ENCODE measurements at regions of chr9 and their contacts with region 1.

Region 1: GRCh38 chr9:112819635-112820496 is 69.3 kb downstream of the SNX30 start:
- DNase-seq: peak; percentile 52 to 75
- ATAC-seq: peak; percentile 99 to 100 (median 100)
- H3K4me3 ChIP-seq: no peak overlapping the region
- H3K27ac ChIP-seq: peak overlapping the region; percentile 60
- H3K4me1 ChIP-seq: peaks cover 7% of the 10 kb centered on the region
- H3K27me3 ChIP-seq: no peaks in the 10 kb centered on the region
- CTCF ChIP-seq: peak; percentile 77

Region 2: DNA sequence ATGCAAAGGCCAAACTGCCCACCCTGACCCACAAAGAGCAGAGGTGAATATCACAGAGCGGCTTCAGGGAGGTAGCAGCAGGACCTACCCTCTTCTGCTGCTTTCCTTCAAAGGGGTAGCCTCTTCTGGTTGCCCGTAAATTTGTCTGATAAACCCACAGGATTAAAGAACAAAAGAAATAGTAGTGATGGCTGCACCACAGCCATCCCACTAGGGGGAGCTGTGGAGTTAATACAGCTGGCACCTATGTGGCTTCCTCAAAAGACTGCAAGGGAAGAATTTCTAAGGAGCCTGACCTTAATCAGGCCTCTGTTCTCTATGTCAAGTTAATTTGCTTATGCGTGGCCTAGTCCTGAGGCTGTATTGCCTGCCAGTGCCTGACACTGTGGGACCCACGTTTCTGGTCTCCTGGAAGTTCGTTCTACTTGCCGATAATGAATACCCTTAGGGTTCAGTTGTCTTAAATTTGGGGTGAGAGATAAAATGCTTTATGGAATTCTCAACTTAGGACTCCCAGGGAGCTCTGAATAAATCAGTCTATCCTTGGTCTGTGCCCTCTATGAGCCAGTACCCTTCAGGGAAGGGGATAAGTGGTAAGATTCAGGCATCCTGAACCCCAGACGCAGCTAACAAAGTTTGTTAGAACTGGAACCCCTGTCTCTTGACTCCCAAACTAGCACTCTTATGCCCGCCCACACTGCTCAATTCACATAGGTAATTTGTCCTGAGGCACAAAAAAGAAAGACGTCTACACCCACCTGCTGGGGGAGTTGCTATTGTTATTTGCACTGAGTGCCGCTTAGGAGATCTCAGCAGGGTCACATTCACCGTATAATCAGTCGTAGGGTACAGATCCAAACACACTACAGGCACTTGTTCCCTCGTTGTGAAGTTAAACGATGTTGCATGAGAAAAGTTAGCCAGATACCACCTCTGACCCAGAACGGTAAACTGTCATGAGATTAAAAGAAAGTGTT is 721.9 kb before region 1 on chr9:
- intact Hi-C with region 1: loop called in 1 of 2 experiments (anchors 10 kb)
- DNase-seq: peak; percentile 22 to 61
- ATAC-seq: peak; percentile 48 to 75 (median 70)
- H3K4me3 ChIP-seq: no peak overlapping the region
- H3K27ac ChIP-seq: no peak overlapping the region
- H3K4me1 ChIP-seq: no peaks in the 10 kb centered on the region
- H3K27me3 ChIP-seq: no peaks in the 10 kb centered on the region
- CTCF ChIP-seq: peak; percentile 73

Region 3: GRCh38 chr9:112750111-112750767 is 69.6 kb before region 1 on chr9 and contains the start of gene SNX30:
- intact Hi-C with region 1: loop called in 1 of 2 experiments (anchors 5 kb)
- DNase-seq: peak; percentile 91 to 95
- ATAC-seq: peak; percentile 96 to 97 (median 96)
- H3K4me3 ChIP-seq: peak within 1 kb of the TSS; percentile 98
- H3K27ac ChIP-seq: peak within 1 kb of the TSS; percentile 89
- H3K4me1 ChIP-seq: peaks cover 36% of the 10 kb centered on the region
- H3K27me3 ChIP-seq: no peaks in the 10 kb centered on the region
- CTCF ChIP-seq: peak; percentile 11
- total RNA-seq, gene SNX30: 1.6 to 2.8 (median 2.3) TPM

Region 4: DNA sequence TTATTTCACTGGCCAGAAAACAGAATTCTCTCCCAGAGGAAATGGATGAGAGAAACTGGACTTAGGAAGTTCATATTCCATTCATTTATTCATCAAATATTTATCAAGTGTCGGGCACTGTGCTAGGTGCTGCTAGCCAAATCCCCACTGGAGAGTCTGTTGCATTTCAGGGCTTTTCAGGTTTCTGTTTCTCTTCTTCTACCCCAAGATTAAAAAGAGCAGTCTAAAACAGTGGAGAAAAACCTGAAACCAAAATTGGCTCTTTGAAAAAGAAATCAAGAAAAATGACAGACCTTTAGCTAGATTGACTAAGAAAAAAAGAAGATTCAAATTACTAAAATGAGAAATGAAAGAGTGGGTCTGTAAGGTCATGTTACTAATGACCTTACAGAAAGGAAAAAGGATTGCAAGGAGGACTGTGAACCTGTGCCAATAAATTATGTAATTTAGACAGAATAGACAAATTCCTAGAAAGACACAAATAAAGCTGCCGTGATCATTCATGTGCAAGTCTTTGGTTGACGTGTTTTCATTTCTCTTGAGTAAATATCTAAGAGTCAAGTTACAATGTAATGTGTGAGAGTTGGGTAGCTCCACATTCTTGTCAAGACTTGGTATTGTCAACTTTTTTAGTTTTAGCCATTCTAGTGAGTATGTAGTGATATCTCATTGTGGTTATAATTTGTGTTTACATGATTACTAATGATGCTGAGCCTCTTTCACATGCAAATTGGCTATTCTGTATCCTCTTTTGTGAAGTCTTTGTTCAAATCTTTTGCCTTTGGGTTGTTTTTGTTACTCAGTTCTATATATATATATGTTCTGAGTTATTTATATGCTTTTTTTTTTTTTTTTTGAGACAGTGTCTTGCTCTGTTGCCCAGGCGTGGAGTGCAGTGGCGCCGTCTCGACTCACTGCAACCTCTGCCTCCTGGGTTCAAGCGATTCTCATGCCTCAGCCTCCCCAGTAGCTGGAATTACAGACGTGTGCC is 45.6 kb before region 1 on chr9:
- intact Hi-C with region 1: no loop called
- DNase-seq: no peak
- ATAC-seq: no peak
- H3K4me3 ChIP-seq: no peak overlapping the region
- H3K27ac ChIP-seq: no peak overlapping the region
- H3K4me1 ChIP-seq: no peaks in the 10 kb centered on the region
- H3K27me3 ChIP-seq: no peaks in the 10 kb centered on the region
- CTCF ChIP-seq: no peak